Activated CD8-positive, alpha-beta T cell treated with anti-CD3 and anti-CD28 coated beads, Interleukin-2, amount 10 ng/mL, durations not matched to agents 7 days and 5 days (primary cell): ENCODE measurements at regions of chr3 and their contacts with region 1.

Region 1: DNA sequence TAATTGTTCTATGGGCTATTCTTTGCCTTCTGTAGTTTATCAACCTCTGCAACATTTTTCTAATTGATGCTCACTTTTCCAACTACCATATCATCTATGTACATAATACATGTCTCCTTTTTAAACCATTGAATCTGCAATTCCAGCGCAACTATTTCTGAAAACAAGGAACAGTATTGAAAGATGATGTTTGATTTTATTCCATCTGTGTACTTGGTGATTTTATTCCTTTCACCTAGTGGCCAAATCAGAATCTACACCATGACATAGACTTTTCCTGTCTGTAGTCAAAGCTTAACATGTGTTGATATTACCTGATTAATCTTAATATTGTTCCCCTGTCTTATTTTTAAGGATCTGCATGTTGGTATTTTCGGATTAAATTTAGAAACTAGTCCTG is 13.0 kb downstream of the NKTR start:
- DNase-seq: no peak
- ATAC-seq: peak; percentile 65
- H3K4me3 Mint-ChIP-seq: no peak overlapping the region
- H3K27ac Mint-ChIP-seq: peak overlapping the region; percentile 3
- H3K4me1 Mint-ChIP-seq: peaks cover 39% of the 10 kb centered on the region
- H3K27me3 Mint-ChIP-seq: no peaks in the 10 kb centered on the region

Region 2: DNA sequence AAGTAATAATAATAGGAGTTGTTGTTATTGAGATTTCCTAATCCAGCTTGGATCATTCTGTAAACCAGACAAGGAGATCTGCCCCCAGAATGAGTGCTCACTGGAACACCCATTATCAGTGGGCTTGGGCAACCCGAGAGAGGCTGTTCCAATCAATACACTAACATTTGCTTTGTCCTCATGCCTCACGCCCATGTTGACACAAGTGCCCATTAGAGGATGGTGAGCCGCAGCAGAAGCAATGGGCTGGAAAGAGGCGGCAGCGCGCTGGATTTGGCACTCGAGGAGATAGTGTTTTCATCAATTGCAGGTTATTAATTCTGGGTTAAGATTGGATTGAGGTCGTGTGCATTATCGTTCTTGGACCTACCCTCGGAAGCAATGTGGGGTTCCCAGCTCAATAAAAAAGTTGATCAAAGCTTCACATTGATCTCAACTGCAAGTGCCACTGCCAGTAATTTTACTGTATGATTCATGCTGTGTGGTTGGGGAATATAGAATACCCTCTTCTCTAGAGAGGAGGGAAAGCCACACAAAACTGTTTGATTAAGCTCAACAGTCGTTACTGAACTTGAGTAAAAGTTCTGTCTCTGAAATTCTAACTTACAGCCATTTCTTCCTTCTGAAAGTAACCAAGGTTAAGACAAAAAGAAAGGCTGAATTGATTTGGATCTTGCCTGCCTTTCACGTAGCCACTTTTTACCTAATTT is 218.7 kb before region 1 on chr3:
- CTCF ChIA-PET with region 1: no interaction called
- POLR2A ChIA-PET with region 1: no interaction called
- DNase-seq: no peak
- ATAC-seq: no peak
- H3K4me3 Mint-ChIP-seq: no peak overlapping the region
- H3K27ac Mint-ChIP-seq: no peak overlapping the region
- H3K4me1 Mint-ChIP-seq: no peaks in the 10 kb centered on the region
- H3K27me3 Mint-ChIP-seq: no peaks in the 10 kb centered on the region

Region 3: DNA sequence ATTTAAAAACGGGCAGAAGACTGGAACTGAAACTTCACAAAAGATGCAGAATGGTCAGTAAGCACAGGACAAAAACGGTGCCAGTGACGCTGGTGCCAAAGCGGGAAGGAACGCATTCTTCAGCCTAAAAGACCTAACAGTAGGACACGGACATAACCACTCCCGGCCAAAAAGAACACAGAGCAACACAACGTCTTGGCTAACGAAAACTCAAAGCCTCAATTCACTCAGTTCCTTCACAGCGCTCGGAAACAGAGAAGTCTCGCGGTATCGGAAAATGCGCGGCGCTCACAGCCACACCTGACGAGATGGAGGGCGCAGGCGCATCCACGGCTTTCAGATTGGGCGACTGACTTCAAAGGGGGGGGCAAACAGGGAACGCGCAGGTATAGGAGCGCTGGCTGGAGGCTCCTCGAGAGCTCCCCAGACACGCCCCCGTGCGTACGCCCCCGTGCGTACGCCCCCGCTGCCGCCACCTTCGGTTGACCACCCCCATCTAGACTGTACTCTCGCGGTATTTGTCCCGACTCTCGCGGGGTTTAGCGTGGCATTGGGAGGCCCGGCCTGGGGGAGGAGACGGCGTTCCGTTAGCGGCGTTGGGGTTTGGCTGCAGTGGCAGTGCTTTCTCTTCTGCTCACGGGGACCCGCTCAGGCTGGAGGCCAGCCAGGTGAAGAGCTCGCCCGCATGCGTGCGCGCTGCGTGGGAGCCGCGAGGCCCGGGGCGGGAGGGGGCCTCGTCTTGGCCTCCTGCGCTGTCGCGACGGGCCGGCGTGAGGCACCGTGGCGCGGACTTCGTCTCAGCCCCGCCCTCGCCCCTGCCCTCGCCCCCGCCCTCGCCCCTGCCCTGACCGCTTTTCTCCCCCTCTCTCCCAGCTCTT is 13.1 kb before region 1 on chr3 and contains the start of gene NKTR:
- CTCF ChIA-PET with region 1: interaction called, 69 read pairs
- POLR2A ChIA-PET with region 1: interaction called, 16 read pairs
- DNase-seq: peak; percentile 99
- ATAC-seq: peak; percentile 91
- H3K4me3 Mint-ChIP-seq: peak within 1 kb of the TSS; percentile 94
- H3K27ac Mint-ChIP-seq: peak within 1 kb of the TSS; percentile 99
- H3K4me1 Mint-ChIP-seq: peaks cover 31% of the 10 kb centered on the region
- H3K27me3 Mint-ChIP-seq: no peaks in the 10 kb centered on the region
- total RNA-seq, gene NKTR: 85.9 to 90.3 TPM

Region 4: GRCh38 chr3:42635111-42635510 is 21.6 kb after region 1 on chr3:
- CTCF ChIA-PET with region 1: interaction called, 21 read pairs
- POLR2A ChIA-PET with region 1: no interaction called
- DNase-seq: no peak
- ATAC-seq: no peak
- H3K4me3 Mint-ChIP-seq: no peak overlapping the region
- H3K27ac Mint-ChIP-seq: peak overlapping the region; percentile 23
- H3K4me1 Mint-ChIP-seq: peaks cover 2% of the 10 kb centered on the region
- H3K27me3 Mint-ChIP-seq: no peaks in the 10 kb centered on the region